Activated CD4-positive, alpha-beta memory T cell treated with anti-CD3 and anti-CD28 coated beads, Interleukin-2, amount 10 ng/mL, durations not matched to agents 7 days and 5 days (primary cell): ENCODE measurements at regions of chr1 and their contacts with region 1.

Region 1: GRCh38 chr1:203649999-203650855 is 23.6 kb downstream of the ATP2B4 start:
- DNase-seq: peak; percentile 65
- H3K4me3 Mint-ChIP-seq: peak overlapping the region; percentile 67
- H3K27ac Mint-ChIP-seq: peak overlapping the region; percentile 98
- H3K4me1 Mint-ChIP-seq: peaks cover 81% of the 10 kb centered on the region
- H3K27me3 Mint-ChIP-seq: no peaks in the 10 kb centered on the region

Region 2: GRCh38 chr1:203593723-203594122 is 56.5 kb before region 1 on chr1:
- CTCF ChIA-PET with region 1: interaction called, 11 read pairs
- POLR2A ChIA-PET with region 1: interaction called, 3 read pairs
- DNase-seq: peak; percentile 72
- H3K4me3 Mint-ChIP-seq: no peak overlapping the region
- H3K27ac Mint-ChIP-seq: no peak overlapping the region
- H3K4me1 Mint-ChIP-seq: peaks cover 26% of the 10 kb centered on the region
- H3K27me3 Mint-ChIP-seq: peaks cover 4% of the 10 kb centered on the region

Region 3: GRCh38 chr1:203663294-203663693 is 13.1 kb after region 1 on chr1:
- CTCF ChIA-PET with region 1: interaction called, 4 read pairs
- POLR2A ChIA-PET with region 1: interaction called, 14 read pairs
- DNase-seq: no peak
- H3K4me3 Mint-ChIP-seq: no peak overlapping the region
- H3K27ac Mint-ChIP-seq: peak overlapping the region; percentile 72
- H3K4me1 Mint-ChIP-seq: peaks cover 68% of the 10 kb centered on the region
- H3K27me3 Mint-ChIP-seq: no peaks in the 10 kb centered on the region

Region 4: GRCh38 chr1:203673550-203674427 is 23.6 kb after region 1 on chr1:
- CTCF ChIA-PET with region 1: interaction called, 34 read pairs
- POLR2A ChIA-PET with region 1: interaction called, 64 read pairs
- DNase-seq: peak; percentile 80
- H3K4me3 Mint-ChIP-seq: peak overlapping the region; percentile 69
- H3K27ac Mint-ChIP-seq: peak overlapping the region; percentile 97
- H3K4me1 Mint-ChIP-seq: peaks cover 75% of the 10 kb centered on the region
- H3K27me3 Mint-ChIP-seq: no peaks in the 10 kb centered on the region

Region 5: GRCh38 chr1:203682473-203683383 is 32.5 kb after region 1 on chr1:
- CTCF ChIA-PET with region 1: interaction called, 5 read pairs
- POLR2A ChIA-PET with region 1: interaction called, 24 read pairs
- DNase-seq: peak; percentile 80
- H3K4me3 Mint-ChIP-seq: peak overlapping the region; percentile 0
- H3K27ac Mint-ChIP-seq: peak overlapping the region; percentile 81
- H3K4me1 Mint-ChIP-seq: peaks cover 55% of the 10 kb centered on the region
- H3K27me3 Mint-ChIP-seq: no peaks in the 10 kb centered on the region